ENCODE measurements at regions of chr9 and their contacts with region 1.

Region 1: GRCh38 chr9:16133556-16134227 is 580.8 kb downstream of the CCDC171 start:
- DNase-seq: peak; percentile 49 to 79
- ATAC-seq: peak; percentile 83 to 92
- H3K4me3 ChIP-seq: no peak overlapping the region
- H3K27ac ChIP-seq: peak overlapping the region; percentile 25 to 61; a peak in 5 of 6 replicates
- H3K4me1 ChIP-seq: peaks cover 14% of the 10 kb centered on the region
- CTCF ChIP-seq: peak; percentile 66
- EP300 ChIP-seq: no peak
- POLR2A ChIP-seq: no peak
- RAD21 ChIP-seq: peak; percentile 63 to 74

Region 2: GRCh38 chr9:15873569-15874177 is 260.0 kb before region 1 on chr9:
- CTCF ChIA-PET with region 1: interaction called, 14 read pairs
- POLR2A ChIA-PET with region 1: no interaction called
- DNase-seq: peak; percentile 18 to 58
- ATAC-seq: peak in 1 of 2 experiments; percentile 72; a peak in 3 of 6 replicates
- H3K4me3 ChIP-seq: no peak overlapping the region
- H3K27ac ChIP-seq: peak overlapping the region; percentile 0 to 35; a peak in 2 of 6 replicates
- H3K4me1 ChIP-seq: peaks cover 3% of the 10 kb centered on the region; the same call in 1 of the 3 replicates
- CTCF ChIP-seq: peak; percentile 85
- EP300 ChIP-seq: no peak
- POLR2A ChIP-seq: no peak
- RAD21 ChIP-seq: peak; percentile 89 to 92

Region 3: GRCh38 chr9:16103620-16104397 is 29.9 kb before region 1 on chr9:
- CTCF ChIA-PET with region 1: interaction called, 11 read pairs
- POLR2A ChIA-PET with region 1: no interaction called
- DNase-seq: no peak
- ATAC-seq: no peak
- H3K4me3 ChIP-seq: no peak overlapping the region
- H3K27ac ChIP-seq: no peak overlapping the region
- H3K4me1 ChIP-seq: no peaks in the 10 kb centered on the region
- CTCF ChIP-seq: no peak
- EP300 ChIP-seq: no peak
- POLR2A ChIP-seq: no peak
- RAD21 ChIP-seq: no peak

Region 4: GRCh38 chr9:16145196-16145950 is 11.7 kb after region 1 on chr9:
- CTCF ChIA-PET with region 1: interaction called, 14 read pairs
- POLR2A ChIA-PET with region 1: no interaction called
- DNase-seq: no peak
- ATAC-seq: peak in 1 of 2 experiments; percentile 47; a peak in 1 of 6 replicates
- H3K4me3 ChIP-seq: no peak overlapping the region
- H3K27ac ChIP-seq: no peak overlapping the region
- H3K4me1 ChIP-seq: no peaks in the 10 kb centered on the region
- CTCF ChIP-seq: no peak
- EP300 ChIP-seq: no peak
- POLR2A ChIP-seq: no peak
- RAD21 ChIP-seq: no peak

Region 5: DNA sequence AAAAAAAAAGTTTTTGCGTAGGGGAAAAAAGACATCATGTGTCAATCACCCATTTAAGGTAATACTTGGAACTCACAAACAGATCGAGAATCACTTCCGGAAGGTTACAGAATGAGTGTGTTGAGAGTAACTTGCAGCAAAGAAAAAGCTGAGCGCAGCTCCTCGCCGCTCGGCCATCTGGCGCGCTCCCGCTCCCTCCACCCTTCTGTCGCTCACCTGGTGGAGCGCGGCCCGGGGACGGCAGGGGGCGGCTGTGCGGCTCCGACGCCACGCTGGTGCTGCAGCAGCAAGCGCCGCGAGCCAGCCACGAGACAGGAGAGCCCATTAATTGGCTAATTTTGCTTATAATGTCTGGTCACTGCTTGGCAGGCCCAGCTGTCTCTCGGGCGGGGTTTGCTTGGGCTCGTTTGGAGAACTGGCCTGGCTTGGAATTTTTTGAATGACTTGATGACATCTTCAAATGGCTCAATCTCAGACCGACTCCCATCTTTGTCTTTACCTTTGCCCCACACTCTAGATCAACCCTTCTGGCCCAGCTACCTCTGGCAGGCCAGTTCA is 20.9 kb after region 1 on chr9:
- CTCF ChIA-PET with region 1: interaction called, 15 read pairs
- POLR2A ChIA-PET with region 1: no interaction called
- DNase-seq: peak in 1 of 2 experiments; percentile 27
- ATAC-seq: peak; percentile 70 to 90; a peak in 5 of 6 replicates
- H3K4me3 ChIP-seq: no peak overlapping the region
- H3K27ac ChIP-seq: peak overlapping the region in 1 of 2 experiments; percentile 51; a peak in 1 of 6 replicates
- H3K4me1 ChIP-seq: no peaks in the 10 kb centered on the region
- CTCF ChIP-seq: no peak
- EP300 ChIP-seq: no peak
- POLR2A ChIP-seq: no peak
- RAD21 ChIP-seq: peak in 1 of 2 experiments; percentile 46; a peak in 2 of 5 replicates

Region 6: DNA sequence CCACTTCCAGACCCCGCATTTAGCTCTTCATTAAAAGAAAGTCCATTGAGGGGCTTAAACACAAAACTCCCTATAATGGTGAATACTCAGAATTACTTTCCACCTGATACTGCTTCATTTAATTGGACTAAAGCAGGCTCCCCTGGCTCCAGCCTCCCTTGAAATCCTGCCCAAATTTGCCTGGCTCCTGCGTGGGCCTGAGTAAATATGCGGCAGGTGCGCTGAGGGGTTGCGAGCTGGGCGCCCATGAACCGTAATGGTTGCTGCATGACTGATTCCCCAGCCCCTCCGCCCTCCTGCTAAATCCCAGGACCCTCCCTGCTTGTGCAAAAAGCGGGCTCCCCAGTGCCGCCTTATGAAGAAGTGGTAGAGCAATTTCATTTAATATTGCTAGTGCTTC is 97.0 kb after region 1 on chr9:
- CTCF ChIA-PET with region 1: no interaction called
- POLR2A ChIA-PET with region 1: no interaction called
- DNase-seq: no peak
- ATAC-seq: no peak
- H3K4me3 ChIP-seq: no peak overlapping the region
- H3K27ac ChIP-seq: no peak overlapping the region; a peak in 1 of 6 replicates
- H3K4me1 ChIP-seq: peaks cover under 1% of the 10 kb centered on the region; the same call in 2 of the 3 replicates
- CTCF ChIP-seq: no peak
- EP300 ChIP-seq: no peak
- POLR2A ChIP-seq: no peak
- RAD21 ChIP-seq: no peak

Region 7: GRCh38 chr9:16241231-16241630 is 107.5 kb after region 1 on chr9:
- CTCF ChIA-PET with region 1: no interaction called
- POLR2A ChIA-PET with region 1: no interaction called
- DNase-seq: peak in 1 of 2 experiments; percentile 51
- ATAC-seq: peak in 1 of 2 experiments; percentile 78; a peak in 3 of 6 replicates
- H3K4me3 ChIP-seq: no peak overlapping the region
- H3K27ac ChIP-seq: peak overlapping the region; percentile 53 to 82
- H3K4me1 ChIP-seq: peaks cover 54% of the 10 kb centered on the region
- CTCF ChIP-seq: no peak
- EP300 ChIP-seq: no peak
- POLR2A ChIP-seq: no peak
- RAD21 ChIP-seq: no peak